Heart right ventricle (tissue), 16 donors: ENCODE measurements at regions of chr15 and their contacts with region 1.

Region 1: GRCh38 chr15:72685925-72686794 is at the starts of genes BBS4 and HIGD2B:
- DNase-seq: peak; percentile 87 to 88
- ATAC-seq: peak; percentile 98 to 99 (median 99)
- H3K4me3 ChIP-seq: peak within 1 kb of the TSS; percentile 57 to 92 (median 73)
- H3K27ac ChIP-seq: peak within 1 kb of the TSS; percentile 75 to 96 (median 88)
- H3K4me1 ChIP-seq: peaks cover 0 to 18% (median 7%) of the 10 kb centered on the region in 9 donors
- H3K27me3 ChIP-seq: no peaks in the 10 kb centered on the region
- CTCF ChIP-seq: no peak
- total RNA-seq, gene BBS4: 6.8 to 18.0 (median 12.7) TPM
- total RNA-seq, gene HIGD2B: not detected

Region 2: DNA sequence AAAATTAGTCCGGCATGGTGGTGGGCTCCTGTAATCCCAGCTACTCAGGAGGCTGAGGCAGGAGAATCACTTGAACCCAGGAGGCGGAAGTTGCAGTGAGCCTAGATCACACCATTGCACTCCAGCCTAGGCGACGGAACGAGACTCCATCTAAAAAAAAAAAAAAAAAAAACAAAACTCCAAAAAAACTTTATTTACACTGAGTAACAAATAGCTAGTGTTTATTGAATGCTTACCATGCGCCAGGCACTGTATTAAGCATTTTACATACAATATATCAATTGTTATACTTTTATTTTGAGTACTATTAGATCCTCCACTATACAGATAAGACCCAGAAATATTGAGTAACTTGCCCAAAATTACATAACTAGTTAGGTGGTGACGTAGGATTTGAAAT is 229.5 kb before region 1 on chr15:
- intact Hi-C with region 1: loop called in 1 of 10 experiments (anchors 5 kb)
- DNase-seq: no peak
- ATAC-seq: no peak
- H3K4me3 ChIP-seq: no peak overlapping the region
- H3K27ac ChIP-seq: no peak overlapping the region
- H3K4me1 ChIP-seq: peaks cover 0 to 6% (median 0%) of the 10 kb centered on the region in 9 donors
- H3K27me3 ChIP-seq: no peaks in the 10 kb centered on the region
- CTCF ChIP-seq: no peak